ENCODE measurements at regions of chr9 and their contacts with region 1.

Region 1: GRCh38 chr9:35116898-35117551 is 1.4 kb upstream of the ATOSB start:
- DNase-seq: peak; percentile 77 to 96 (median 84)
- ATAC-seq: peak; percentile 67
- H3K4me3 ChIP-seq: peak overlapping the region; percentile 66
- H3K4me3 Mint-ChIP-seq: peak overlapping the region; percentile 94
- H3K27ac ChIP-seq: peak overlapping the region; percentile 81 to 83
- H3K27ac Mint-ChIP-seq: peak overlapping the region; percentile 79
- H3K4me1 ChIP-seq: peaks cover 46% of the 10 kb centered on the region
- H3K4me1 Mint-ChIP-seq: peaks cover 42% of the 10 kb centered on the region
- H3K27me3 ChIP-seq: no peaks in the 10 kb centered on the region
- H3K27me3 Mint-ChIP-seq: no peaks in the 10 kb centered on the region
- CTCF ChIP-seq: peak; percentile 90

Region 2: DNA sequence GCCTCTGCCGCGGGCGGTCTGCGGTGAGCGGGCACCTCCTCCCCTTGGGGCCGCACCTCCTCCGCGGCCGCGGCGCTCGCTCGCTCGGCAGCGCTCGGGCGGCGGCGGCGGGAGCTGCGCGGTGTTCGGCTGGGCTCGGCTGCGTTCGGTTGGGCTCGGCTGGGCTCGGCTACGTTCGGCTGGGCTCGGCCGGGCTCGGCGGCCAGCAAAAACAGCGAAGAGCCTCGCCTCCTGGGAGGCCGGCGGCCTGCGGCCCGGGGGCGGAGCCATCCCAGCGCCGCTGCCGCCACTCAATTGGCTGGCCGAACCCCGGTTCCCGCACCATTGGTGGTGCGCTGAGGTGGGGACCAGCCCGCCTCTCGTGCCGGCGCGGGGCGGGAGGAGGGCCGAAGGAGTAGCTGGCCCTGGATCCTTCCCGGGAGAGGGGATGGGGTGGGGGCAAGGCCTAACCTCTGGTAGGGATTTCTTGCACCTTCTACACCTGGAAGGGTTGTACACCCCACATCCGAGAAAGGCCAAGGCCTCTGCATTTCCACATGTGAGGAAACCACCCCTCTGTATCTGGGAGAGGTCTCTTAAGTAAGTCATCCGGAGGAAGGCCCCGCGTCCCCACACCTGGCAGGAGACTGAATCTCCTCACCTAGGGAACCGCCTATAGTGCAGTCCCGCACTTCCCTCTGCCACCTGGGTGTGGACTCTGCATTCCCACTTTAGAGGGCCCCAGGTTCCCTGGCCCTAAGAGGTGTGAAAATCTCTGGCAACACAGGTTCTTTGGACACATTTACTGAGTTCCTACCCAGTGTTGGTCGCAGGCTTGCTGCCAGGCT is 593.8 kb before region 1 on chr9 and contains the start of gene ENHO:
- CTCF ChIA-PET with region 1: no interaction called
- POLR2A ChIA-PET with region 1: no interaction called
- intact Hi-C with region 1: loop called in 1 of 2 experiments (anchors 10 kb)
- DNase-seq: peak; percentile 75 to 96 (median 90)
- ATAC-seq: peak; percentile 98
- H3K4me3 ChIP-seq: peak within 1 kb of the TSS; percentile 55
- H3K4me3 Mint-ChIP-seq: peak within 1 kb of the TSS; percentile 69
- H3K27ac ChIP-seq: no peak within 1 kb of the TSS
- H3K27ac Mint-ChIP-seq: no peak within 1 kb of the TSS
- H3K4me1 ChIP-seq: peaks cover 16% of the 10 kb centered on the region
- H3K4me1 Mint-ChIP-seq: peaks cover 12% of the 10 kb centered on the region
- H3K27me3 ChIP-seq: no peaks in the 10 kb centered on the region
- H3K27me3 Mint-ChIP-seq: no peaks in the 10 kb centered on the region
- CTCF ChIP-seq: no peak
- total RNA-seq, gene ENHO: 0.45 TPM in 1 of 2 experiments, not detected in the other

Region 3: GRCh38 chr9:35079426-35080341 is 37.3 kb before region 1 on chr9 and contains the start of gene FANCG:
- CTCF ChIA-PET with region 1: interaction called, 6 read pairs
- POLR2A ChIA-PET with region 1: interaction called, 11 read pairs
- intact Hi-C with region 1: loop called (anchors 2 to 5 kb)
- DNase-seq: peak; percentile 60 to 90 (median 74)
- ATAC-seq: peak; percentile 90
- H3K4me3 ChIP-seq: peak within 1 kb of the TSS; percentile 69
- H3K4me3 Mint-ChIP-seq: peak within 1 kb of the TSS; percentile 96
- H3K27ac ChIP-seq: peak within 1 kb of the TSS; percentile 43 to 62
- H3K27ac Mint-ChIP-seq: peak within 1 kb of the TSS; percentile 91
- H3K4me1 ChIP-seq: peaks cover 19% of the 10 kb centered on the region
- H3K4me1 Mint-ChIP-seq: peaks cover 23% of the 10 kb centered on the region
- H3K27me3 ChIP-seq: no peaks in the 10 kb centered on the region
- H3K27me3 Mint-ChIP-seq: no peaks in the 10 kb centered on the region
- CTCF ChIP-seq: no peak
- total RNA-seq, gene FANCG: 21.7 to 24.6 TPM

Region 4: GRCh38 chr9:35161713-35162604 is 44.9 kb after region 1 on chr9 and contains the start of gene UNC13B:
- CTCF ChIA-PET with region 1: interaction called, 12 read pairs
- POLR2A ChIA-PET with region 1: interaction called, 4 read pairs
- intact Hi-C with region 1: loop called in 1 of 2 experiments (anchors 2 kb)
- DNase-seq: peak; percentile 37 to 88 (median 66)
- ATAC-seq: peak; percentile 83
- H3K4me3 ChIP-seq: peak within 1 kb of the TSS; percentile 87
- H3K4me3 Mint-ChIP-seq: peak within 1 kb of the TSS; percentile 98
- H3K27ac ChIP-seq: no peak within 1 kb of the TSS
- H3K27ac Mint-ChIP-seq: peak within 1 kb of the TSS; percentile 21
- H3K4me1 ChIP-seq: peaks cover 27% of the 10 kb centered on the region
- H3K4me1 Mint-ChIP-seq: peaks cover 35% of the 10 kb centered on the region
- H3K27me3 ChIP-seq: no peaks in the 10 kb centered on the region
- H3K27me3 Mint-ChIP-seq: no peaks in the 10 kb centered on the region
- CTCF ChIP-seq: no peak
- total RNA-seq, gene UNC13B: 0.38 to 0.84 TPM

Region 5: DNA sequence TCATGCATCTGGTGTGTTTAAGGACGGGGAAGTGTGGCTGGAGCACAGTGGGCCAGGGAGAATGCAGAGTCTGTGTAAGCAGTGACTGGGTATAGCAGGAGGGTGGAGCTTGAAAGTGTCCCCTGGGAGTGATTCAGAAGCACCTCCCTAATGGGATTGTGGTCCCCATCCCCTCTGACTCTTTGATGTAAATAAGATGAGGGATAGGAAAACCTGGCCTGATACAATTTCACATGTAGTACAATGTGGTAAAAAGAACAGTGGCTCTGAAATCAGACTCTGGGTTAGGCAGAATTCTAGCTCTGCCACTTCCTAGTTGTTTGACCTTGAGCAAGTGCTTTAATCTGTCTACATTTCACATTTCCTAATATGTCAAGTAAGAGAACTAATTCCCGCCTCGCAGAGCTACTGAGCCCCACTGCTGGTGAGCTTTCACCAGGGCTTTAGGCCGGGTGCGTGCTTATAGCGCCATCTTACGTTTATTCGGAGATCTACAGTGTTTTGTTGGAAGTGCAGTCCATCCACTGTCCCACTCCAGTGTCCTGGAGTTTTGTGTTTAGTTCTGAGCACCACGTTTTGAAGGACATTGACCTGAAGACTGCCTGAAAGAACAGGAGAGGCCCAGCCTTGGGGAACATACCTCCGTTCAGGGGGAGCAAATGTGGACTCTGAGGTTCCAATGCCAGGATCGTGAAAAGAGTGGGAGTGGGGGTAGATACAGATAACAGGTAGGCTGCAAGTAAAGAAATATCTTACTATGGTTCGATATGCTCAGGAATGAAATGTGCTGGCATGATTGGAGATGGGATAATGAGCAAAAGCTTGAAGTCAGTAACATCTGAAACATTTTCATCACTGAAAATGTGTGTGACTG is 436.9 kb after region 1 on chr9:
- CTCF ChIA-PET with region 1: interaction called, 6 read pairs
- POLR2A ChIA-PET with region 1: interaction called, 4 read pairs
- intact Hi-C with region 1: loop called in 1 of 2 experiments (anchors 1 kb)
- DNase-seq: peak in 11 of 14 experiments; percentile 6 to 69 (median 14)
- ATAC-seq: peak; percentile 62
- H3K4me3 ChIP-seq: no peak overlapping the region
- H3K4me3 Mint-ChIP-seq: no peak overlapping the region
- H3K27ac ChIP-seq: no peak overlapping the region
- H3K27ac Mint-ChIP-seq: no peak overlapping the region
- H3K4me1 ChIP-seq: no peaks in the 10 kb centered on the region
- H3K4me1 Mint-ChIP-seq: no peaks in the 10 kb centered on the region
- H3K27me3 ChIP-seq: no peaks in the 10 kb centered on the region
- H3K27me3 Mint-ChIP-seq: no peaks in the 10 kb centered on the region
- CTCF ChIP-seq: peak; percentile 46

Region 6: DNA sequence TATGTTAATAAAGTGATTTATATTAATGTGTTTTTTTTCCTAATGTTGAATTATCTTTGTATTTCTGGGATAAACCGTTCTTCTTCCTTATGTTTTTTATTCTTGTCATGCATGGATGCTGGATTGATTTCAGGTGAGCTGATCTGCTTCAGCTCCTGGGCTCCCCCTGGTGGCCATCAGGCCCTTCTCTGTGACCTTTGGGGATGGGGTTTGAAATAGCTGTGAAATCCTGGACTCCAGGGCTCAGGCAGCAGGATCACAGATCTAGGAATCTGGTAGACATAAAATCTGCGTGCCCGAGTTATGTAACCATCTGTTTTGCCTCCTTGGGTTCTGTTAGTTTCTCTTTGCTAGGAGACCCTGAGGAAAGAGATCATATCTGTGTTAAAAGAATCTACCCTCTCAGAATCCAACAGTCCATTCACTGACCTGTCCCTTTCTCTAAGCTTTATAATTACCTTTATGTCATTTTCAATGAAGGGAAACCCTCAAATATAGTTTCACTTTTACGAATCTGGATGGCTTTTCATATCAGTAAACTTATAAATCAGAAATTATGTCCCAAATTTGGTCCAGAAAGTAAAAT is 765.3 kb after region 1 on chr9:
- CTCF ChIA-PET with region 1: no interaction called
- POLR2A ChIA-PET with region 1: no interaction called
- intact Hi-C with region 1: loop called in 1 of 2 experiments (anchors 5 kb)
- DNase-seq: peak; percentile 68 to 90 (median 78)
- ATAC-seq: peak; percentile 64
- H3K4me3 ChIP-seq: no peak overlapping the region
- H3K4me3 Mint-ChIP-seq: no peak overlapping the region
- H3K27ac ChIP-seq: no peak overlapping the region
- H3K27ac Mint-ChIP-seq: no peak overlapping the region
- H3K4me1 ChIP-seq: no peaks in the 10 kb centered on the region
- H3K4me1 Mint-ChIP-seq: no peaks in the 10 kb centered on the region
- H3K27me3 ChIP-seq: no peaks in the 10 kb centered on the region
- H3K27me3 Mint-ChIP-seq: peaks cover 13% of the 10 kb centered on the region
- CTCF ChIP-seq: peak; percentile 98

Measured in CD4-positive, alpha-beta T cell (primary cell).